Activated B cell treated with CpG ODN at 0.5 μM for 24 hours (primary cell): ENCODE measurements at regions of chr16 and their contacts with region 1.

Region 1: GRCh38 chr16:69424053-69424934 is at the start of gene CYB5B:
- DNase-seq: peak; percentile 81
- ATAC-seq: peak; percentile 95
- H3K4me3 Mint-ChIP-seq: peak within 1 kb of the TSS; percentile 96
- H3K27ac Mint-ChIP-seq: peak within 1 kb of the TSS; percentile 91
- H3K4me1 Mint-ChIP-seq: peaks cover 24% of the 10 kb centered on the region
- H3K27me3 Mint-ChIP-seq: no peaks in the 10 kb centered on the region
- CTCF ChIP-seq: no peak
- total RNA-seq, gene CYB5B: 112 and 115 TPM in 2 replicates

Region 2: GRCh38 chr16:69339289-69340108 is 84.8 kb before region 1 on chr16 and contains the starts of genes COG8 and NIP7:
- CTCF ChIA-PET with region 1: no interaction called
- POLR2A ChIA-PET with region 1: interaction called, 4 read pairs
- intact Hi-C with region 1: loop called (anchors 1 kb)
- DNase-seq: peak; percentile 87
- ATAC-seq: peak; percentile 91
- H3K4me3 Mint-ChIP-seq: peak within 1 kb of the TSS; percentile 100
- H3K27ac Mint-ChIP-seq: peak within 1 kb of the TSS; percentile 99
- H3K4me1 Mint-ChIP-seq: peaks cover 39% of the 10 kb centered on the region
- H3K27me3 Mint-ChIP-seq: no peaks in the 10 kb centered on the region
- CTCF ChIP-seq: no peak
- total RNA-seq, gene COG8: 40.5 and 45.4 TPM in 2 replicates
- total RNA-seq, gene NIP7: 42.4 and 44.3 TPM in 2 replicates

Region 3: GRCh38 chr16:69435977-69436820 is 11.9 kb after region 1 on chr16:
- CTCF ChIA-PET with region 1: no interaction called
- POLR2A ChIA-PET with region 1: interaction called, 7 read pairs
- intact Hi-C with region 1: loop called (anchors 1 kb)
- DNase-seq: no peak
- ATAC-seq: peak; percentile 21
- H3K4me3 Mint-ChIP-seq: peak overlapping the region; percentile 5
- H3K27ac Mint-ChIP-seq: peak overlapping the region; percentile 38
- H3K4me1 Mint-ChIP-seq: peaks cover 61% of the 10 kb centered on the region
- H3K27me3 Mint-ChIP-seq: no peaks in the 10 kb centered on the region
- CTCF ChIP-seq: no peak

Region 4: DNA sequence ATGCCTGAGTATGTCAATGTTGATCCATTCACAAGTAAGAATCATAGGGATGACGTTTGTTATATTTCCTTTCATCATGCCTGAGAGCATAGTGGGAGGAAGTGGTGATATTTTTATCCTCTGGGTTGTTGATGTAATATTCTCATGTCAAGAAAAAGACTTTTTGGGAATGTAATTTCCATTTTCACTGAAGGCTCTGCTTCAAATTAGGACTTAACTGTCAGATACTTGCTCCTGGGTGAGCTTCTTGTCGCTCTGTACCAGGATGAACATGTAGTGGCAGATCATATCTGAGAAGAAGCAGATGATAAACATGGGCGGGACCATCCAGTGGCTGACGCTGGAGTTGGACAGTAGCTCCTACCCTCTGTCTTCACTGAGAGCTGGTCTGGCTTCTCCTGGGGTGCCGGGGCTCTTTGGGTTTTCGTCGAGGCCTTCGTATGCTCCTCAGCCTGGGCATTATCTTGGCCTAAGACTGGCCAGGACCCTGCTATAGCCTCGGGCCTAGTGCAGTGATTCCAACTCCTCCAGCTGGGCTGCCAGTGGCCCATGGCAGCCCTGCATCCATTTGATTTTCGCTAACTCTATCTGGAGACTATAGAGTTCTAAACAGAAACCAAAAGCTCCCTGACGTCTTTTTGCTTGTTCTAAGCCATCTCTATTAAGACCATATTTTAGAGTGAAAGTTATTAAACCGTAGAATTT is 19.8 kb after region 1 on chr16:
- CTCF ChIA-PET with region 1: no interaction called
- POLR2A ChIA-PET with region 1: interaction called, 7 read pairs
- intact Hi-C with region 1: loop called (anchors 2 kb)
- DNase-seq: no peak
- ATAC-seq: peak; percentile 56
- H3K4me3 Mint-ChIP-seq: peak overlapping the region; percentile 72
- H3K27ac Mint-ChIP-seq: peak overlapping the region; percentile 82
- H3K4me1 Mint-ChIP-seq: peaks cover 40% of the 10 kb centered on the region
- H3K27me3 Mint-ChIP-seq: no peaks in the 10 kb centered on the region
- CTCF ChIP-seq: no peak

Region 5: DNA sequence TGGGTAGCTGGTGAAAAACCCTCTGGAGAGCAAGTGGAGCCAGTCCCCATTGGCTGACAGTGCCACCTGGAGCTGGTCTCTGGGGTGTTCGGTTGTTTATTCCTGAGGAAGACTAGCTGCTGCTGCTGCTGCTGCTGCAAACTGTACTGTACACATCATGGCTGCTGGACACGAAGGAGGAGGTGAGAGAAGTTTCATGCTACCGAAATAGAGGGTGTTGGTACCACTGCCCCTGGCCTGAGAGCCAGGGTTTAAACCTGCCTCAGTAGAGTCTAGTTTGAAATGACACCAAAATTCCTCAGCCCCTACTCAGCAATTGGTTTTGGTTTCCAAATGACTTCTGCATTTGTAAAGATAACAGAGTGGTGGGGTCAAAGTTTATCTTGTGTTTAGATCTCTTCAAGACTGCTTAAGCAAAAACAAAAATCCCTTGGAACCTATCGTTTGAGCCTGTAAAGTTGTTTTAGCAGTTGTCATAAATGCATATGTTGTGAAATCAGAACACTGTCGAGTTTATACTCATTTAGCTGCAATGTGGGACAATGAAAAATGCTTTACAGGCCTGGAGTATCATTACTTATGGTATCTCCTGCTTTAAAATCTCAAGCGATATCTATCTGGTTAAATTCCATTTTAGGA is 40.9 kb after region 1 on chr16:
- CTCF ChIA-PET with region 1: no interaction called
- POLR2A ChIA-PET with region 1: interaction called, 9 read pairs
- intact Hi-C with region 1: loop called (anchors 1 kb)
- DNase-seq: no peak
- ATAC-seq: no peak
- H3K4me3 Mint-ChIP-seq: peak overlapping the region; percentile 1
- H3K27ac Mint-ChIP-seq: peak overlapping the region; percentile 69
- H3K4me1 Mint-ChIP-seq: peaks cover 36% of the 10 kb centered on the region
- H3K27me3 Mint-ChIP-seq: no peaks in the 10 kb centered on the region
- CTCF ChIP-seq: no peak